T-cell (primary cell): ENCODE measurements at regions of chr2 and their contacts with region 1.

Region 1: DNA sequence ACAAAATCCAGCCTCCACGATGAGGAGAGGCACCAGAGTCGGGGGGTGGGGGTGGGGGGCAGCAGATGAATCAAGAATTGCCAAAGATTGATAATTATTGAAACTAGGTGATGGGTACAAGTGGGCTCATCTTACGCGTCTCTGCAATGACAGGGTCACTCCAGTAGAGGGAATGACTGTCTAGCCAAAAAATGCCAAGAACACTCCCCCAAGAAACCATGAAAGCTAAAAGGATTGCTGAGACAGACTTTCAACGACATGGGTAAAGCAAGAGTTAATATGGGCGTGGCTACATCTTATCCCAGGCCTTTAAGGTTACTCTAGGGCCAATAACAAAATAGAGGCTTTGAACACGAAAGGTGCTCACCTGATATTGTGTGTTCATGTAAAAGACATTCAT is 86.5 kb downstream of the STK39 start:
- DNase-seq: peak in 2 of 35 experiments; percentile 3 to 39
- ATAC-seq: peak in 1 of 4 experiments; percentile 13
- H3K4me3 ChIP-seq: no peak overlapping the region
- H3K4me3 Mint-ChIP-seq: no peak overlapping the region
- H3K27ac ChIP-seq: no peak overlapping the region
- H3K27ac Mint-ChIP-seq: no peak overlapping the region
- H3K4me1 ChIP-seq: peaks cover 0 to 3% of the 10 kb centered on the region in 2 experiments
- H3K4me1 Mint-ChIP-seq: peaks cover 15 to 36% (median 32%) of the 10 kb centered on the region in 3 donors
- H3K27me3 ChIP-seq: no peaks in the 10 kb centered on the region
- H3K27me3 Mint-ChIP-seq: no peaks in the 10 kb centered on the region

Region 2: DNA sequence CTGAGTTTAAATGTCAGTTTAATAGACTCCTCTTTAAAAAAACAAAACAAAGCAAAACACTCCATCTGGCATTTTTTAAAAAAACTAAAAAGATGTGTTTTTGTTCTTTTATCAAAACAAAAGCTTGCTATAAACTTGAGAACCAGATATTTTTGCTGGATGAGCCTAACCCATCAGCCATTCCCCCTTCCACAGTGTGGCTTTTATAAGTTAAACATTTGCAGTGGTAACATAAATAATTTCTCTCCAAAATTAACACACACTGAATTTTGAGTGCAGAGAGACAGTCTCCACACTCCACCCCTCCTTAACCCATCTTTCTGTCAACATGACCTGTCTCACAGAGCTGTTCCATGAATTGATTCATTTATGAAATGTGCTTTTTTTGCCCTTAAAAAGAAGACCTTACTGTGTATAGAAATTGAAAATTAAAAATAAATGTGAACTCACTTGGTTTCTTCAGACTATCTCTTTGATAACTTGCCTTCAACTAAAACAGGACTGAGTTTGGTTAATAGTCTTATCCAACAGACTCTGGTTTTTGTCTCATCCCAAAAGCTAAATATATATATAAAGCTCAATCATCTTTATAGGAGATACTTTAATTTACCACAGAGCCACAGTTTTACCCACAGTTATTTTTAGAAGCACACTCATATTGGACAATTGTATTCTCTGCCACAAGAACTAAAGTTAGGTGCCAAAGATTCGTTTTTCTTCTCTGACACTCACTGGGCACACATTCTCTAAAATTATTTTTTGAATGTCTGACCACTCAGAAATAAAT is 151.3 kb after region 1 on chr2:
- CTCF ChIA-PET with region 1: no interaction called
- POLR2A ChIA-PET with region 1: interaction called in 1 of 2 experiments, 16 read pairs
- DNase-seq: no peak
- ATAC-seq: no peak
- H3K4me3 ChIP-seq: no peak overlapping the region
- H3K4me3 Mint-ChIP-seq: no peak overlapping the region
- H3K27ac ChIP-seq: no peak overlapping the region
- H3K27ac Mint-ChIP-seq: no peak overlapping the region
- H3K4me1 ChIP-seq: no peaks in the 10 kb centered on the region
- H3K4me1 Mint-ChIP-seq: no peaks in the 10 kb centered on the region
- H3K27me3 ChIP-seq: no peaks in the 10 kb centered on the region
- H3K27me3 Mint-ChIP-seq: no peaks in the 10 kb centered on the region